HCT116 (cell line): ENCODE measurements at regions of chr22 and their contacts with region 1.

Region 1: DNA sequence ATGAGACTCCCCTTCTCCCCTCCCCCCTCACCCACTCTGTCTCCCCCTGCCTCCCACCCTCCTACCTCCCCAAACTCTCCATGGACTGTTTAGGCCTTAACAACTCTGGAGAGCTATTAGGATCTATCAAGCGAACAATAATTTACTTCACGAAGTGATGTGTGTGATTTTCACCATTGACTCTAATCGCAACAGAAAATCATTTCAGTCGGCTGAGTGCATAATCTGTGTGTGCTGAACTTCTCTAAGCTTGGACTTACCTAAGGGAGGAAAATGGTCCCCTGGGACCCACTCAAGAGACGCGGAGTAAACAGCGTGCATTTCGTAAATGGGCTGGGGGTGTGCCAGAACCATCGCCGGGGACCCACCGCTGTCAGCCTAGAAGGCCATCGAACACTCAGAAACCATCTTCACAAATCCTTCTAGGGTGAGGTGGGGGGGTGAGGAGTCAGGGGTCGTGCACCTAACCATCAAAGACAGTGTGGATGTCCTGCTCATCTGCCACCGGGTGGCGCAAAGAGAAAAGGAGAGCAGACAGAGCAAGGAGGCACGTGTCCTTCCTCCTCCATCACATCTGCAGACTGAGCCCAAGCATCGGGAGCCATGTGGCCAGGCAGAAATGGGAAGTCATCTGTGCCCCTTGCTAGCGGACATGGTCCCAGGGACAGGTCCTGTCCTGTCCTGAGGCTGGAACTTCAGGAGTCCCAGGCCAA is 62.1 kb upstream of the NUP50 start:
- DNase-seq: no peak
- ATAC-seq: peak; percentile 94
- H3K4me3 ChIP-seq: no peak overlapping the region
- H3K27ac ChIP-seq: no peak overlapping the region
- H3K4me1 ChIP-seq: peaks cover 0 to 12% of the 10 kb centered on the region in 2 experiments; a peak in 2 of 4 replicates
- H3K27me3 ChIP-seq: no peaks in the 10 kb centered on the region
- CTCF ChIP-seq: peak; percentile 52 to 72 (median 58)
- POLR2A ChIP-seq: no peak
- RAD21 ChIP-seq: peak; percentile 84

Region 2: DNA sequence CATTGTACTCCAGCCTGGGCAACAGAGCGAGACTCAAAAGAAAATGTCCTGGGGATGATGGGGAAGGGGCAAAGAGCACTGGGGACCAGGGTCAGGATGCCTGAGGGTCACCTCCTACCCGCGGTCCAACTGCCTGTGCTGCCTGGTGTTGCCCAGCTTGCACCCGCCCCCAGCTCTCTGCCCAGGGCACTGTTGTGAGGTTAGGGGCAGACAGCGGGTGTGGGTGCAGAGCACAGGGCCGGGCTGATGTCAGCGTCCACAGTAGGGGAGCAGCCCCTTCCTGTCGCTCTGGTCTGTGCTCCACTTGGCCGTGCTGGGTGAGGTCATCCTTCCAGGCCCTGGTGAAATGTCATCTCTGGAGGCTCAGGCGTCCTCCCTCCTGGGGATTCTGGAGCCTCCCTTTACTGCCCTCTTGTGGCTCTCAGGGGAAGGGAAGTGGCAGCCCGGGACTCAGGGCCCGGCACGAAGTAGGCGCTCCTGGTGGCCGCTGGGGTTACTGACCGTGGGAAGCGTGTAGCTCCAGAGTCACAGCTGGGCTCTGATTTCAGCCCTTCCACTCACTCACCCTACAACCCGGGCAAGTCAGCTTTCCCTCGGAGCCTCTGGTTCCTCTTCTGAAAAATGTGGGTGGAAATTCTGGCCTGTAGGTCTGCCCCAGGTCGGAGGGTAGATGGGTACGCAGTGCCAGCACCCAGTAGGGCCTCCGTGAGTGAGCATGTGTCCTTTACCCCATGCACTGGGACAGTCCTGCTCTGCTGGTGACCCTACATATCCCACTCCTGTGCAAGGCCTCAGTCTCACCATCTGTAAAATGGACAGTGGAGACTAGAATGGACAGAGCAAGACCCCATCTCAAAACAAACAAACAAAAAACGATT is 416.9 kb before region 1 on chr22:
- CTCF ChIA-PET with region 1: no interaction called
- POLR2A ChIA-PET with region 1: no interaction called
- RAD21 ChIA-PET with region 1: no interaction called
- intact Hi-C with region 1: no loop called
- DNase-seq: peak; percentile 83
- ATAC-seq: peak; percentile 92
- H3K4me3 ChIP-seq: peak overlapping the region; percentile 22 to 31
- H3K27ac ChIP-seq: peak overlapping the region; percentile 3; the same call in 1 of the 2 replicates
- H3K4me1 ChIP-seq: peaks cover 27 to 32% of the 10 kb centered on the region in 2 experiments
- H3K27me3 ChIP-seq: no peaks in the 10 kb centered on the region
- CTCF ChIP-seq: peak; percentile 98 to 100 (median 99)
- POLR2A ChIP-seq: no peak
- RAD21 ChIP-seq: peak; percentile 58

Region 3: DNA sequence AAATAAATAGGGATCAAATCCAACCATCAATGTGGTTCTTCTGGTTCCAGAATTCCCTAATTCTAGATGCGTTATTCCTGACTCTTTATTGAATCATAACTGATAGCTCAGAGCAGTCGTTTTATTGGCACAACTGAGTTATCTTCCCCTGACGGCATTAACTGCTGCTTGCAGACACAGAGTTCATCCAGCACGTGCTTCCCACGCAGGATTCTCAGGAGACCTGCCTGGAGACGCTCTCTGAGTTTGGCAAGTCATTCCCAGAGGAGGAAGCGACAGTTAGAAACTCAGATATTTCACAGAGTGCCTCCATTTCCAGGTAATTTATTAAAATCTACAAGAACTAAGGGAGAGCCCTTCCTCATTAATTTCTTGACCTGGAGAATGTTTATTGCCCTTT is 56.5 kb before region 1 on chr22:
- CTCF ChIA-PET with region 1: no interaction called
- POLR2A ChIA-PET with region 1: no interaction called
- RAD21 ChIA-PET with region 1: no interaction called
- intact Hi-C with region 1: no loop called
- DNase-seq: no peak
- ATAC-seq: no peak
- H3K4me3 ChIP-seq: no peak overlapping the region
- H3K27ac ChIP-seq: no peak overlapping the region
- H3K4me1 ChIP-seq: no peaks in the 10 kb centered on the region
- H3K27me3 ChIP-seq: peaks cover 43% of the 10 kb centered on the region
- CTCF ChIP-seq: no peak
- POLR2A ChIP-seq: no peak
- RAD21 ChIP-seq: no peak

Region 4: GRCh38 chr22:45112136-45112879 is 10.6 kb after region 1 on chr22:
- CTCF ChIA-PET with region 1: no interaction called
- POLR2A ChIA-PET with region 1: no interaction called
- RAD21 ChIA-PET with region 1: no interaction called
- intact Hi-C with region 1: no loop called
- DNase-seq: no peak
- ATAC-seq: no peak
- H3K4me3 ChIP-seq: no peak overlapping the region
- H3K27ac ChIP-seq: no peak overlapping the region
- H3K4me1 ChIP-seq: no peaks in the 10 kb centered on the region
- H3K27me3 ChIP-seq: no peaks in the 10 kb centered on the region
- CTCF ChIP-seq: no peak
- POLR2A ChIP-seq: no peak
- RAD21 ChIP-seq: no peak

Region 5: DNA sequence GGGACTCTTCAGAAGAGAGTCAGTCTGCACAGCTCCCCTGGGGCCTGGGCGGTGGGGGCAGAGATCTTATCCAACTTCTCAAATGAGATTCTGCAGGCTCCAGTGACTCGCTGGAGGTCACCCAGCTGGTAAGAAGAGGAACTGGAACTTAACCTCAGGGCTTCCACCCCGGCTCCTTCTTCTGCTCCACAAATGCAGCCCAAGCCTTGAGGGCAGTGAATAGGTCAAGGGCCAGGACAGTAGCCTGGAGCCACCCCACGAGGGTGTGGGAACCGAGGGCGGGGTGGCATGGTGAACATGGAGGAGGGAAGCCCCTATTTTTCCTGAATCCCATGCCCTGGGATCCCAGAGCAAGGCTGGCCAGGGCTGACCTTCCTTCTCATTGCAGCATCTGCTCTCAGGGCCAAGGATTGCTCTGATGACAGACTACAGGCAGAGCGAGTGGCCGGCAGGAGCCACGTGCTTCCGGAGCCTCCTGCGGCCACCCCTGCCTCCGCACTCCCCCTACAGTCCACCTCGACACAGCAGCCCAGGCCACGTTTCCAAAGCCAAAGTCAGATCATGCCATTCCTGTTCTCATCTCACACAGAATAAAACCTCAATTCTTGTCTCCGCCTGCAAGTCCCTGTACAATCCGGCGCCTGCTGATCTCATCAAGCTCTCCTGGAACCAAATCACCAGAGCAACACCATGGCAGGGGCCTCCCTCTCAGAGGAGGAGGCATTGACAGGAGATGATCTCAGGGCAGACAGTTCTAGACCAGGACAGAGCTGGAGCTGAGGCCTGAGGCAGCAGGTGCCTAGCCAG is 162.0 kb after region 1 on chr22:
- CTCF ChIA-PET with region 1: no interaction called
- POLR2A ChIA-PET with region 1: no interaction called
- RAD21 ChIA-PET with region 1: no interaction called
- intact Hi-C with region 1: loop called (anchors 2 kb)
- DNase-seq: peak; percentile 46
- ATAC-seq: peak; percentile 95
- H3K4me3 ChIP-seq: no peak overlapping the region
- H3K27ac ChIP-seq: peak overlapping the region; percentile 13; the same call in 1 of the 2 replicates
- H3K4me1 ChIP-seq: peaks cover 8 to 23% of the 10 kb centered on the region in 2 experiments; a peak in 3 of 4 replicates
- H3K27me3 ChIP-seq: no peaks in the 10 kb centered on the region
- CTCF ChIP-seq: peak; percentile 58 to 77 (median 66)
- POLR2A ChIP-seq: no peak
- RAD21 ChIP-seq: peak; percentile 89

Region 6: GRCh38 chr22:45435544-45436139 is 334.0 kb after region 1 on chr22:
- CTCF ChIA-PET with region 1: no interaction called
- POLR2A ChIA-PET with region 1: no interaction called
- RAD21 ChIA-PET with region 1: no interaction called
- intact Hi-C with region 1: loop called (anchors 5 kb)
- DNase-seq: peak; percentile 60
- ATAC-seq: peak; percentile 97
- H3K4me3 ChIP-seq: no peak overlapping the region
- H3K27ac ChIP-seq: peak overlapping the region; percentile 31; the same call in 1 of the 2 replicates
- H3K4me1 ChIP-seq: peaks cover 4 to 8% of the 10 kb centered on the region in 2 experiments; a peak in 2 of 4 replicates
- H3K27me3 ChIP-seq: no peaks in the 10 kb centered on the region
- CTCF ChIP-seq: peak; percentile 89 to 97 (median 96)
- POLR2A ChIP-seq: no peak
- RAD21 ChIP-seq: peak; percentile 84

Region 7: GRCh38 chr22:45602824-45603630 is 501.4 kb after region 1 on chr22:
- CTCF ChIA-PET with region 1: no interaction called
- POLR2A ChIA-PET with region 1: no interaction called
- RAD21 ChIA-PET with region 1: no interaction called
- intact Hi-C with region 1: no loop called
- DNase-seq: peak; percentile 80
- ATAC-seq: peak; percentile 85
- H3K4me3 ChIP-seq: peak overlapping the region in 1 of 2 experiments; percentile 20; a peak in 2 of 4 replicates
- H3K27ac ChIP-seq: no peak overlapping the region
- H3K4me1 ChIP-seq: peaks cover 36 to 60% of the 10 kb centered on the region in 2 experiments
- H3K27me3 ChIP-seq: no peaks in the 10 kb centered on the region
- CTCF ChIP-seq: no peak
- POLR2A ChIP-seq: no peak
- RAD21 ChIP-seq: no peak